GM12878 (cell line): ENCODE measurements at regions of chr9 and their contacts with region 1.

Region 1: DNA sequence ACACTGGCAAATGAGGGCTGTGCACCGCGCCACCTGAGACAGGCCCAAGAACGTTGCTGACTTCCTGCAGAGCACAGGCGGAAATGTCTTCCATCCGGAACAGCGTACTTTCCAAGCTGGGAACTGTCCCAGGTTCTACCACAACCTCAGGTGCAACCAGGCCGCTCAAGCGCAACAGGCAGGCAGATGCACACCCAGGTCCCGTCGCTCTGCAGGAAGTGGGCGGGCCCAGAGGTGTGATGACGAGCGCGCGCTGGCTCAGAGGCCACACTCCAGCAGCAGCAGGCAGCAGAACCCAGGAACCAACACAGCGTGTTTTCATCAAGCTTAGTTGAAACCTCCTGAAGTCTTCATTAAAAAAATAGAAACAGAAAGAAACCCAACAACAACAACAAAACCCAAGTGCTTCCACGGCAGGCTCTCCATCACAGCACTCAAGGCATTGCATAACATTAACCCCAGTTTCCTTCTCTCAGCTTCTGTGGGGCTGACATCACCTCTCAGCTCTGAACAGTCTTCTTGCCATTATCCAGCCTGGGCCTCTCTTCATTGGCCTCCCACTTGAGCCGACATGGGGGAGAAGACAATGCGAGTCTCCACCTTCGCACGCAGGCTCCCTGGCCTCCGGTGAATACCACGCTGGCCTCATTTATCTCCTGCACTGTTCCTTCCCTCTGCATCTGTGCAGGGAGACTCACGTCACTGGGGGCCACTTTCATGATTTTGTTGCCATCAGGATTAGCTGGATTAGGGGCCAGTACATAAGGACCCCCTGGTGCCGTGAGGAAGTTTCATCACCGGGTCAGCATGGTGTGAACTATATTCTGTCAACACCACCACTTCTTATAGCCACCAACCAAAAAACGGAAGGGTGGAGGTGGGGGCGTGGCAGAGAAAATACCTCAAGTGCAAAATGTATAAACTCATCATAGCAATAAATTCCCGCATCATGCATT is 22.1 kb downstream of the PTCH1 start:
- DNase-seq: peak; percentile 88
- ATAC-seq: peak; percentile 99
- H3K4me3 ChIP-seq: peak overlapping the region; percentile 59
- H3K27ac ChIP-seq: peak overlapping the region; percentile 65
- H3K4me1 ChIP-seq: peaks cover 20% of the 10 kb centered on the region
- H3K27me3 ChIP-seq: no peaks in the 10 kb centered on the region
- CTCF ChIP-seq: no peak
- EP300 ChIP-seq: peak in 1 of 2 experiments; percentile 20; a peak in 1 of 4 replicates
- POLR2A ChIP-seq: peak; percentile 51
- RAD21 ChIP-seq: no peak

Region 2: GRCh38 chr9:95389373-95389772 is 105.3 kb before region 1 on chr9:
- CTCF ChIA-PET with region 1: no interaction called
- POLR2A ChIA-PET with region 1: no interaction called
- RAD21 ChIA-PET with region 1: no interaction called
- SMC1A ChIA-PET with region 1: no interaction called
- in situ Hi-C with region 1: no loop called
- intact Hi-C with region 1: no loop called
- DNase-seq: no peak
- ATAC-seq: no peak
- H3K4me3 ChIP-seq: no peak overlapping the region
- H3K27ac ChIP-seq: no peak overlapping the region
- H3K4me1 ChIP-seq: no peaks in the 10 kb centered on the region
- H3K27me3 ChIP-seq: no peaks in the 10 kb centered on the region
- CTCF ChIP-seq: no peak
- EP300 ChIP-seq: no peak
- POLR2A ChIP-seq: no peak
- RAD21 ChIP-seq: no peak

Region 3: DNA sequence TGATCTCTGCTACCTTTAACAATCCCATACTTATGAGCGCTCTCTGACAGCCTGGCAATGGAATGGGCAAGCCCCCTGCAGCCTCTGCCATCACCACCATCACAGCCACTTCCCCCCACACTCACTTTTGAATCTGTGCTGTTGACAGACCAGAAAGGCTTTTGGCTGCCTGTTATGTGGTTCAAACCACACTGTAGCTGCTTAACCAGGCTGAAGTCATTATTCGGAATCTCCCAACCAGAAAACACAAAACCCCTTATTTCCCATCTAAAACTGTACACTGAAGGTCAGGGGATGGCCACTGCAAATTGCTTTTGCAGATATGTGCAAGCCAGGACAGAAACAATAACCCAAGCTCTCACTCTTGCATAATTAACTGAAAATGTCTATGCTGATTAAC is 13.7 kb before region 1 on chr9:
- CTCF ChIA-PET with region 1: interaction called, 5 read pairs
- POLR2A ChIA-PET with region 1: interaction called, 4 read pairs
- RAD21 ChIA-PET with region 1: interaction called, 4 read pairs
- SMC1A ChIA-PET with region 1: interaction called, 10 read pairs
- in situ Hi-C with region 1: no loop called
- intact Hi-C with region 1: no loop called
- DNase-seq: peak; percentile 33
- ATAC-seq: peak; percentile 90
- H3K4me3 ChIP-seq: no peak overlapping the region
- H3K27ac ChIP-seq: no peak overlapping the region
- H3K4me1 ChIP-seq: no peaks in the 10 kb centered on the region; the same call in 1 of the 2 replicates
- H3K27me3 ChIP-seq: no peaks in the 10 kb centered on the region
- CTCF ChIP-seq: no peak
- EP300 ChIP-seq: peak; percentile 44 to 68; a peak in 2 of 4 replicates
- POLR2A ChIP-seq: no peak
- RAD21 ChIP-seq: no peak

Region 4: GRCh38 chr9:95505717-95506427 is 11.2 kb after region 1 on chr9:
- CTCF ChIA-PET with region 1: interaction called, 7 read pairs
- POLR2A ChIA-PET with region 1: interaction called, 17 read pairs
- RAD21 ChIA-PET with region 1: interaction called, 5 read pairs
- SMC1A ChIA-PET with region 1: interaction called, 9 read pairs
- in situ Hi-C with region 1: no loop called
- intact Hi-C with region 1: no loop called
- DNase-seq: no peak
- ATAC-seq: peak; percentile 12
- H3K4me3 ChIP-seq: peak overlapping the region; percentile 94
- H3K27ac ChIP-seq: peak overlapping the region; percentile 90
- H3K4me1 ChIP-seq: peaks cover 20% of the 10 kb centered on the region
- H3K27me3 ChIP-seq: no peaks in the 10 kb centered on the region; a peak in 1 of 4 replicates
- CTCF ChIP-seq: no peak
- EP300 ChIP-seq: no peak
- POLR2A ChIP-seq: peak; percentile 65; the same call in 1 of the 2 replicates
- RAD21 ChIP-seq: no peak

Region 5: DNA sequence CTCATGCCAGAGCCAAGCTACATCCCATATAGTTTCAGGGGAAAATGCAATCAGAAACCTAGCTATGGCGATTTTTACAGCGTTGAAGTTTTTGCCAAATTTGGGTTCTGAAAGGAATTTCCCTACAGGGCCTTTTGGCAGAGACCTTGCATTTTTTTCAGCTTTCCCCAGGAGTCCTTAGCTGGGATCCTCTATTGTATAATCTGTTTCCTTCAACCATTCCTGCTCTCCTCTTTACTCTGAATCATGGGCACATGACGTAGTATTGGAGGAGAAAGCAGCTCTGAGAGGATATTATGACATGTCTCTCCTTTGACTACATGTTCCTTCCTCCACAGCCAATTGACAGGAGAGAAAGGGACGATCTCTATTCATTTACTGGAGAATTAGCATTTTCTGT is 262.3 kb after region 1 on chr9:
- CTCF ChIA-PET with region 1: no interaction called
- POLR2A ChIA-PET with region 1: no interaction called
- RAD21 ChIA-PET with region 1: no interaction called
- SMC1A ChIA-PET with region 1: no interaction called
- in situ Hi-C with region 1: no loop called
- intact Hi-C with region 1: no loop called
- DNase-seq: no peak
- ATAC-seq: no peak
- H3K4me3 ChIP-seq: no peak overlapping the region
- H3K27ac ChIP-seq: no peak overlapping the region
- H3K4me1 ChIP-seq: peaks cover 8% of the 10 kb centered on the region
- H3K27me3 ChIP-seq: no peaks in the 10 kb centered on the region; a peak in 1 of 4 replicates
- CTCF ChIP-seq: no peak
- EP300 ChIP-seq: no peak
- POLR2A ChIP-seq: no peak
- RAD21 ChIP-seq: no peak